Posterior cingulate gyrus (tissue), 11 donors: ENCODE measurements at regions of chr1 and their contacts with region 1.

Region 1: GRCh38 chr1:4652631-4653327 is 1.6 kb upstream of the AJAP1 start:
- DNase-seq: peak in 7 of 10 donors; percentile 72 to 96 (median 84)

Region 2: GRCh38 chr1:3900119-3900968 is 752.4 kb before region 1 on chr1 and contains the start of gene C1orf174:
- intact Hi-C with region 1: loop called (anchors 10 kb)
- DNase-seq: peak; percentile 92 to 99 (median 96)

Region 3: GRCh38 chr1:4431491-4431890 is 221.3 kb before region 1 on chr1:
- intact Hi-C with region 1: no loop called
- DNase-seq: peak in 1 of 10 donors; percentile 70

Region 4: GRCh38 chr1:4700801-4701200 is 48.0 kb after region 1 on chr1:
- intact Hi-C with region 1: loop called (anchors 2 kb)
- DNase-seq: peak; percentile 78 to 99 (median 92)

Region 5: DNA sequence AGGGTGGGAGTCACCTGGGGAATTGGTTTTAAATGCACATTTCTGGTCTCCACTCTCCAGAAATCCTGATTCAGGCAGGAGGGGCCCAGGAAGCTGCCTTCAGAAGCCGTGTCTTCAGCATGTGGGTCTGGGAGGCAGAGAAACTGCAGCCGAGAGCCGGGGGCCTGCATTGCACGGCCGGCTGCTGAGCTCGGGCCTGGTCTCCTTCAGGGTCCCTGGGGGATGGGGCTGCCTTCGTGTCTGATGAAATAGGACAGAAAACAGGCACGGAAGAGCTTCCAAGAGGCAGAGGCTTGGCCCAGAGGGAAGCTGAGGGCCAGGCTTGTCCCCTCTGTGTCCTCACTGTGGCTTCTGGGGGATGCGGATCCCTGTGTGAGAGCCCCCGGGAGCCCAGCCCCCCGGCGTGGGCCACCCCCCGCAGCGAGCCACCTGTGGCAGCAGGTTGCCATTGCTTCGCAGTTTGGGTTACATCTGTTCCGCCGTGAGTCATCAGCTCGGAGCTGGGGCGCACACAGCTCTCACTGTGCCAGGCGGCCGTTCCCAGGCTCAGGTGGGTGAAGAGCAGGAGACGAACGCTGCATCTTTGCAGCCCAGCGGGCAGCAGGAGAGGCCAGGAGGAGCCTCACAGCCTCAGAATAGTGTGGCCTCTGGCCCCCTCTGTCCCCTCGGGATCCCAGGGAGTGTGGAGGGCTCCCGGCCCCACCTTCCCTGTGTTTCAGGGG is 74.0 kb after region 1 on chr1:
- intact Hi-C with region 1: no loop called
- DNase-seq: peak in 8 of 10 donors; percentile 47 to 95 (median 76)

Region 6: DNA sequence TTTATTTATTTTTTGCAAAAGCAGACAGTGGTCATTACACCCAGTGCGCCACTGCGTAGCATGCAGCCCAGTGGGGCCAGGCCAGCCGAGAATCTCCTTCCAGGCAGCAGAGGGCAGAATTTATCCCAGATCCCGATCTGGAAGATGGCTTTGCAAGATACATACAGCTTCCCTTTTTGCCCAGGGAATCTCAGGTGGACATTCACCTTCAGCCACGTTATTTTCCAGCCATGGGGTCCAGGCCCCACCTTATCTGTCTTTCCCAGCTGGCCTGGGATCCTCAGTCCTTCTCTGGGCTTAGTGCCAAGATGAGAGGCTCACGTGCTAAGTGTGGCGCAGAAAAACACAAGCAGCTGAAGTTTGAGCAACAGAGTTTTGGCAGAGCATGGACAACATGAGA is 125.3 kb after region 1 on chr1:
- intact Hi-C with region 1: loop called (anchors 5 kb)
- DNase-seq: peak; percentile 37 to 93 (median 66)

Region 7: DNA sequence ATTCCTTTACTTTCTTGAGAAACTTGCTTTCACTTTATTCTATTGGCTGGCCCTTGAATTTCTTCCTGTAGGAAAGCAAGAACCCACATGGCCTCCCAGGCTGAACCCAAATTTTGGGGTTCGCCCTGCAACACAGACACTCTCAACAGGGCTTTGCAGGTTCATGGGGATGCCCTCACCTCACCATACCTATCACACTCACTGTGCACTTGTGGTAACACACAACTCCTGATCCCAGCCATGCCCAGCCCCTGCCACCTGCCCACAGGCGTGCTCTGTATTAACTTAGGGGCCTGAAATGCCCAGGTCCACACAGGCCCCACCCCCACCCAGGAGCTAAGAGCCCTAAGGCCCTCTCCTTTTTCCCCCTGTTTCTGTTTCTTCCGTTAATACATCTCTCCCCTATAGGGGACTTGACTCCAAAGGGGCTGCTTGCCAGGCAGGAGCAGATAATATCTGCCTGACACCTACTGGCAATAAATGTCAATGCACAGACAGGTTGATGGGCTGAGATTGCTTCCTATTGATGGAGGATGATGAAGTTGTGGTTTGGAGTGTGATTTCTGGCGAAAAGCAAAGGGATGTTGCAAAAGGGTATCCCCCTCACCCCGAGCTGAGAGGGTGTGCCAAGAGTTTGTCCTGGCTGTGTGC is 173.1 kb after region 1 on chr1:
- intact Hi-C with region 1: loop called (anchors 1 kb)
- DNase-seq: peak in 6 of 10 donors; percentile 14 to 89 (median 28)

Region 8: DNA sequence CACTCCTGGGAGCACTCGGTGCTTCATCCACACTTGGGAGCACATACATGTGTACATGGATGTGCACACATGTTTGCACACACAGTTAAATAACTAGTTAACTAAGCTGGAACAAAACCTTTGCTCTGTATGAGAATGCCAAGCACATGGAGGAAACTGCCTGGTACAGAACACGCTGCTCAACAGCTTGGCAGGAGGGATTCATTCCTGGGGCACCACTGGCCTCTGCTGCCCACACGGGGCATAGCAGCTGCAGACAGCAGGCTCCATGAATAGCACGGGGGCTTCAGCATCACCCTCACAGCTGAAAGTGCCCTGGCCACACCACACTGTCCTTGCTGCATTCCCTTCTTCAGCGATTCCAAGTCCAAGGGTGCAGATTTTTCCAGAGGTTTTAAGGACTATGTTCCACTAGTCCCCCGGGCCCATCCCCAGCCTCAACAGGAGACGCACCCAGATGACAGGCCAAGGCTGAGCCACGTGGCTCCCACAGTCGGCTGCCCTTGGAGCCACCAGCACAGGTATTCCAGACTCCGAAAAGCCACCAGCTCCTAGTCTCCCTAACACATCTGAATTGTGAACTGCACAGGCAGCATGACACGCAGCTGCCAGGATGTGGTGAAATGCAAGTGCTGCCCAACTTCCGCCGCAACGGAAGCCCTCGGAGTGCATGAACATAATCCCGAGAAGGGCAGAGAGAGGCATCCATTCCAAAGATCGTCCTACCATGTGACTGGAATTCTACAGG is 1322.5 kb after region 1 on chr1:
- intact Hi-C with region 1: loop called (anchors 5 kb)
- DNase-seq: peak in 9 of 10 donors; percentile 59 to 96 (median 73)